PC-3 (cell line): ENCODE measurements at regions of chr20 and their contacts with region 1.

Region 1: GRCh38 chr20:56400090-56400542 is 7.7 kb downstream of the CSTF1 start:
- DNase-seq: peak; percentile 84
- ATAC-seq: peak; percentile 84
- H3K4me3 ChIP-seq: no peak overlapping the region
- H3K27ac ChIP-seq: no peak overlapping the region
- H3K4me1 ChIP-seq: no peaks in the 10 kb centered on the region
- H3K27me3 ChIP-seq: no peaks in the 10 kb centered on the region
- CTCF ChIP-seq: peak; percentile 95

Region 2: GRCh38 chr20:56411759-56412472 is 11.8 kb after region 1 on chr20 and contains the start of gene CASS4:
- CTCF ChIA-PET with region 1: no interaction called
- POLR2A ChIA-PET with region 1: no interaction called
- intact Hi-C with region 1: no loop called
- DNase-seq: peak; percentile 43
- ATAC-seq: peak; percentile 31; the same call in 1 of the 2 replicates
- H3K4me3 ChIP-seq: no peak within 1 kb of the TSS
- H3K27ac ChIP-seq: no peak within 1 kb of the TSS
- H3K4me1 ChIP-seq: 0 out of 2 replicates have a peak, but pooled peaks cover 4% of the 10 kb centered on the region
- H3K27me3 ChIP-seq: no peaks in the 10 kb centered on the region
- CTCF ChIP-seq: no peak
- total RNA-seq, gene CASS4: 0.04 and 0.17 TPM in 2 replicates

Region 3: GRCh38 chr20:56468316-56469082 is 68.4 kb after region 1 on chr20 and contains the start of gene RTF2:
- CTCF ChIA-PET with region 1: no interaction called
- POLR2A ChIA-PET with region 1: no interaction called
- intact Hi-C with region 1: loop called (anchors 2 kb)
- DNase-seq: peak; percentile 97
- ATAC-seq: peak; percentile 100
- H3K4me3 ChIP-seq: peak within 1 kb of the TSS; percentile 88
- H3K27ac ChIP-seq: no peak within 1 kb of the TSS
- H3K4me1 ChIP-seq: peaks cover 17% of the 10 kb centered on the region
- H3K27me3 ChIP-seq: peaks cover 3% of the 10 kb centered on the region
- CTCF ChIP-seq: no peak
- total RNA-seq, gene RTF2: 122 and 149 TPM in 2 replicates

Region 4: GRCh38 chr20:56516631-56517030 is 116.5 kb after region 1 on chr20:
- CTCF ChIA-PET with region 1: no interaction called
- POLR2A ChIA-PET with region 1: no interaction called
- intact Hi-C with region 1: loop called (anchors 1 kb)
- DNase-seq: no peak
- ATAC-seq: no peak
- H3K4me3 ChIP-seq: no peak overlapping the region
- H3K27ac ChIP-seq: no peak overlapping the region
- H3K4me1 ChIP-seq: no peaks in the 10 kb centered on the region
- H3K27me3 ChIP-seq: no peaks in the 10 kb centered on the region
- CTCF ChIP-seq: no peak

Region 5: GRCh38 chr20:56540420-56540819 is 140.3 kb after region 1 on chr20:
- CTCF ChIA-PET with region 1: no interaction called
- POLR2A ChIA-PET with region 1: no interaction called
- intact Hi-C with region 1: no loop called
- DNase-seq: no peak
- ATAC-seq: no peak
- H3K4me3 ChIP-seq: no peak overlapping the region
- H3K27ac ChIP-seq: no peak overlapping the region
- H3K4me1 ChIP-seq: no peaks in the 10 kb centered on the region
- H3K27me3 ChIP-seq: no peaks in the 10 kb centered on the region
- CTCF ChIP-seq: no peak

Region 6: DNA sequence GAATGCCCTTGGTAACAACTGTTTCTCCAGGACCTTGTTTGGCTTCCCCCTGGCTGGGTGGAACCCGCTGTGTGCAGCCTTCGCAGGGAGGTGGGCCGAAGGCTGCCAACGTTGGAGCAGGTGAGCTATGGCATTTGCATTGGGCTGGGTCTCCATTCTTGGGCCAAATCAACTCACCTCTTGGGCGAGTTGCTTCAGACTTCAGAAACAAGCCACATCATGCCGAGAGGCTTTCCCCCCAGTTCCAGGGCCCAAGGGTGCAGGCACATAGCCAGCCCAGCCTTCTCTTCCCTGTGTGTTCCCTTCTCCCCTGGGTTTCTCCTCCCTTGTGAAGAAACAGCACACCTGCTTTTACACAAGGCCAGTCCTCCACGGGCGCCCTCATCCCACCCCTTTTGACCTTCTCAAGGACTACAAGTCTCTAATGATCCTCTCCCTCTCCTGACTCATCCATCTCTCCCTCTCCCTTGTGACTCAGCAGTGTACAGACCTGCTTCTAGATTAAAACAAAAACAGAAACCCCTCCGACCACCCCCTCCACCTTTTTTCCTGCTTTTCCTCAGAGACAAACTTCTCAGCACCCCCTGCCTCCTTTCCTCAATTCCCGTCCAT is 174.5 kb after region 1 on chr20:
- CTCF ChIA-PET with region 1: no interaction called
- POLR2A ChIA-PET with region 1: no interaction called
- intact Hi-C with region 1: loop called (anchors 1 kb)
- DNase-seq: peak; percentile 45
- ATAC-seq: peak; percentile 51; the same call in 1 of the 2 replicates
- H3K4me3 ChIP-seq: no peak overlapping the region
- H3K27ac ChIP-seq: no peak overlapping the region
- H3K4me1 ChIP-seq: peaks cover 9% of the 10 kb centered on the region
- H3K27me3 ChIP-seq: no peaks in the 10 kb centered on the region
- CTCF ChIP-seq: no peak